ENCODE measurements at regions of chr3 and their contacts with region 1.

Region 1: GRCh38 chr3:98022978-98023820 is 11.9 kb downstream of the GABRR3 start:
- DNase-seq: peak; percentile 60
- ATAC-seq: peak; percentile 97
- H3K4me3 ChIP-seq: no peak overlapping the region
- H3K27ac ChIP-seq: no peak overlapping the region
- H3K4me1 ChIP-seq: no peaks in the 10 kb centered on the region
- H3K27me3 ChIP-seq: no peaks in the 10 kb centered on the region
- CTCF ChIP-seq: peak; percentile 65 to 98 (median 90); a peak in 5 of 6 replicates
- POLR2A ChIP-seq: no peak
- RAD21 ChIP-seq: peak; percentile 88

Region 2: GRCh38 chr3:97658668-97659285 is 364.4 kb before region 1 on chr3:
- CTCF ChIA-PET with region 1: no interaction called
- POLR2A ChIA-PET with region 1: no interaction called
- RAD21 ChIA-PET with region 1: no interaction called
- intact Hi-C with region 1: loop called (anchors 5 kb)
- DNase-seq: peak; percentile 8
- ATAC-seq: no peak
- H3K4me3 ChIP-seq: no peak overlapping the region
- H3K27ac ChIP-seq: no peak overlapping the region
- H3K4me1 ChIP-seq: no peaks in the 10 kb centered on the region
- H3K27me3 ChIP-seq: no peaks in the 10 kb centered on the region
- CTCF ChIP-seq: peak; percentile 9 to 78 (median 70); a peak in 4 of 6 replicates
- POLR2A ChIP-seq: no peak
- RAD21 ChIP-seq: peak; percentile 37

Region 3: DNA sequence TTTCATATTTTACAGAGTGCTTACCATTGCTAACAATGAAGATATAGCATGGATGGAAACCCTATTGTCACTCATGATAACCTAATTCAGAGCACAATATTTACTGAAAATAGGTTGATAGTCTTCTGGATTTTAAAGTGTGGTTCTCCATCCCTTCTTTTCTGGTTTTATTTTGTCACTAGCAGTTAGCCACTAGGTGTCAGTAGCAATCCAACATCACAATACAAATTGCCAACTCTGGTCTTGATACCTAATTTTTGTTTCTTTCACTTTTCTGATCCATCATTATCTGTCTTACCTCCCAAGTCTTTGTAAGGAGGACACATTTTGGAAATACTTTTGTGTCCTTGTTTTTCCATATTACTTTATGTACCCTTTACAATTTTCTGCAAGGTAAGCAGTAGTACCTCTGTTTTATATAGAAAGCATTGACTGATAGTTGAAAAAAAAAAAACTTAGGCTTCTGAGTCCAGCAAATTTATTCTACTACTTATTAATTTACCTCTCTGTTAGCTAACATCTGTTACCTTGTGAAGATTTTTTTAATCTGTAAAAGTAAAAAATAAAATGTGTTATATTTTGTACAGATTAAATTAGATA is 229.7 kb before region 1 on chr3:
- CTCF ChIA-PET with region 1: interaction called, 7 read pairs
- POLR2A ChIA-PET with region 1: no interaction called
- RAD21 ChIA-PET with region 1: no interaction called
- intact Hi-C with region 1: loop called (anchors 1 kb)
- DNase-seq: peak; percentile 26
- ATAC-seq: peak; percentile 64
- H3K4me3 ChIP-seq: no peak overlapping the region
- H3K27ac ChIP-seq: no peak overlapping the region
- H3K4me1 ChIP-seq: no peaks in the 10 kb centered on the region
- H3K27me3 ChIP-seq: 0 out of 2 replicates have a peak, but pooled peaks cover 4% of the 10 kb centered on the region
- CTCF ChIP-seq: peak; percentile 51 to 87 (median 64); a peak in 5 of 6 replicates
- POLR2A ChIP-seq: no peak
- RAD21 ChIP-seq: peak; percentile 76